ENCODE measurements at regions of chr15 and their contacts with region 1.

Region 1: GRCh38 chr15:91022075-91022835 is at the start of gene VPS33B:
- DNase-seq: peak; percentile 88
- H3K4me3 Mint-ChIP-seq: peak within 1 kb of the TSS; percentile 87
- H3K27ac Mint-ChIP-seq: peak within 1 kb of the TSS; percentile 89
- H3K4me1 Mint-ChIP-seq: peaks cover 34% of the 10 kb centered on the region
- H3K27me3 Mint-ChIP-seq: no peaks in the 10 kb centered on the region
- total RNA-seq, gene VPS33B: 19.8 to 21.2 TPM

Region 2: GRCh38 chr15:90845201-90845949 is 176.9 kb before region 1 on chr15:
- CTCF ChIA-PET with region 1: no interaction called
- intact Hi-C with region 1: no loop called
- DNase-seq: peak; percentile 81
- H3K4me3 Mint-ChIP-seq: no peak overlapping the region
- H3K27ac Mint-ChIP-seq: peak overlapping the region; percentile 74
- H3K4me1 Mint-ChIP-seq: peaks cover 26% of the 10 kb centered on the region
- H3K27me3 Mint-ChIP-seq: no peaks in the 10 kb centered on the region

Region 3: GRCh38 chr15:90902040-90902839 is 120.0 kb before region 1 on chr15:
- CTCF ChIA-PET with region 1: no interaction called
- intact Hi-C with region 1: loop called (anchors 5 kb)
- DNase-seq: peak; percentile 84
- H3K4me3 Mint-ChIP-seq: peak overlapping the region; percentile 86
- H3K27ac Mint-ChIP-seq: peak overlapping the region; percentile 88
- H3K4me1 Mint-ChIP-seq: peaks cover 27% of the 10 kb centered on the region
- H3K27me3 Mint-ChIP-seq: no peaks in the 10 kb centered on the region

Region 4: GRCh38 chr15:91032919-91033803 is 10.9 kb after region 1 on chr15:
- CTCF ChIA-PET with region 1: interaction called, 12 read pairs
- intact Hi-C with region 1: no loop called
- DNase-seq: peak; percentile 79
- H3K4me3 Mint-ChIP-seq: no peak overlapping the region
- H3K27ac Mint-ChIP-seq: no peak overlapping the region
- H3K4me1 Mint-ChIP-seq: no peaks in the 10 kb centered on the region
- H3K27me3 Mint-ChIP-seq: no peaks in the 10 kb centered on the region